Caco-2 (cell line): ENCODE measurements at regions of chr2 and their contacts with region 1.

Region 1: DNA sequence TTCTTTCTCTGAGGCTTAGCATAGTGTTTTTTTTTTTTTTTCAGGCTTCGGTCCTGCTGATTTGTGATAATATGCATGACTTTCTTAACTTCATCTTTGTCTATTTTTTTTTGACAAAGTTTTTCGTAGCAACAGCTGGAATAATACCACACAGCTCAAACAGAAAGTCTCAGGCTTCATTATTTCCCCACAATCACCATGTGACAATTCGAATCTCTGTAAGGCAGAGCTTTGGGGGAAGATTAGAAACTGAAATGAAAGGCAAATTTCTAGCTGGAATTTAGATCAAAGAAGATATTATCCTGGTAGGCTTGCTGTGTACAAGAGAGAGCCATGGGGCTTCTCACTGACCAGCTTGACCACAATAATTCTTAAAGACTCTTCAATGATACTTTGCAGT is 12.2 kb upstream of the CD28 start:
- DNase-seq: no peak
- H3K4me3 ChIP-seq: no peak overlapping the region
- H3K4me3 Mint-ChIP-seq: no peak overlapping the region
- H3K27ac Mint-ChIP-seq: no peak overlapping the region
- H3K4me1 ChIP-seq: peaks cover 91% of the 10 kb centered on the region
- H3K4me1 Mint-ChIP-seq: peaks cover 62% of the 10 kb centered on the region
- H3K27me3 ChIP-seq: no peaks in the 10 kb centered on the region
- H3K27me3 Mint-ChIP-seq: no peaks in the 10 kb centered on the region
- CTCF ChIP-seq: no peak

Region 2: DNA sequence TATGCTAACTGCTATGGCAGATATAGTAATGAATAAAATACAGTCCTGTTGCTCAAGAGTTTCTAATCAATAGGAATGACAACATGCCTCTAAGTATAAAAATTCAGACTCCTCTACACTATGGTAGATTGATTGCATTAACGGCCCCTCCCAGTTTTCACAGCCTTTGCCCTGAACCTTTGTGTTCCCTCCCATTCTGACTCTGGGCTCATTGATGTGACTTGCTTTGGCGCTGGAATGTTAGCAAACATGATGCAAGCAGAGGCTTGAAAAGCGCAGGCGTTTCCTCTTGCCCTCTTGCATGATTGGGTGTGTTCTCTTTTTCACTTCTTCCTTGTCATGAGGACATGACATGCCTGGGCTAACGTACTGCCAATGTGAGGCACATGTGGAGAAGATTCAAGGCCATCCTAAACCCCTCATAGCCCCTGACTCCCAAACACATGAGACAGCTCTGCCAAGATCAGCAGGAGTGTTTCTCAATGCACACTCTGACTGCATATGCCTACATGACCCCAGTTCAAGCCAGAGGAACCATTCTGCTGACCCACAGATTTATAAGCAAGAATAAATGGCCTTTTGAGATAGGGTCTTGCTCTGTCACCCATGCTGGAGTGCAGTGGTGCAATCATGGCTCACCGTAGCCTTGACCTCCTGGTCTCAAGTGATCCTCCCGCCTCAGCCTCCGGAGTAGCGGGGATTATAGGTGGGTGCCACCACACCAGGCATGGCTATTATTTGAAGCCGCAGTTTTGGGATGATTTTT is 37.5 kb before region 1 on chr2:
- CTCF ChIA-PET with region 1: no interaction called
- POLR2A ChIA-PET with region 1: no interaction called
- intact Hi-C with region 1: loop called (anchors 5 kb)
- DNase-seq: peak; percentile 88 to 92
- H3K4me3 ChIP-seq: no peak overlapping the region
- H3K4me3 Mint-ChIP-seq: peak overlapping the region; percentile 5
- H3K27ac Mint-ChIP-seq: peak overlapping the region; percentile 85
- H3K4me1 ChIP-seq: peaks cover 52% of the 10 kb centered on the region
- H3K4me1 Mint-ChIP-seq: peaks cover 54% of the 10 kb centered on the region
- H3K27me3 ChIP-seq: no peaks in the 10 kb centered on the region
- H3K27me3 Mint-ChIP-seq: no peaks in the 10 kb centered on the region
- CTCF ChIP-seq: no peak